ENCODE measurements at regions of chr11 and their contacts with region 1.

Region 1: GRCh38 chr11:60328460-60328859 is 1.4 kb downstream of the MS4A6E start:
- DNase-seq: no peak
- ATAC-seq: no peak
- H3K4me3 ChIP-seq: no peak overlapping the region
- H3K27ac ChIP-seq: no peak overlapping the region
- H3K4me1 ChIP-seq: peaks cover 0 to 9% (median 0%) of the 10 kb centered on the region in 9 donors
- H3K27me3 ChIP-seq: no peaks in the 10 kb centered on the region
- CTCF ChIP-seq: no peak

Region 2: GRCh38 chr11:60447846-60448245 is 119.4 kb after region 1 on chr11:
- intact Hi-C with region 1: loop called in 1 of 10 experiments (anchors 5 kb)
- DNase-seq: no peak
- ATAC-seq: no peak
- H3K4me3 ChIP-seq: no peak overlapping the region
- H3K27ac ChIP-seq: no peak overlapping the region
- H3K4me1 ChIP-seq: peaks cover 0 to 7% (median 0%) of the 10 kb centered on the region in 9 donors
- H3K27me3 ChIP-seq: no peaks in the 10 kb centered on the region
- CTCF ChIP-seq: no peak